Heart right ventricle (tissue), 16 donors: ENCODE measurements at regions of chr1 and their contacts with region 1.

Region 1: DNA sequence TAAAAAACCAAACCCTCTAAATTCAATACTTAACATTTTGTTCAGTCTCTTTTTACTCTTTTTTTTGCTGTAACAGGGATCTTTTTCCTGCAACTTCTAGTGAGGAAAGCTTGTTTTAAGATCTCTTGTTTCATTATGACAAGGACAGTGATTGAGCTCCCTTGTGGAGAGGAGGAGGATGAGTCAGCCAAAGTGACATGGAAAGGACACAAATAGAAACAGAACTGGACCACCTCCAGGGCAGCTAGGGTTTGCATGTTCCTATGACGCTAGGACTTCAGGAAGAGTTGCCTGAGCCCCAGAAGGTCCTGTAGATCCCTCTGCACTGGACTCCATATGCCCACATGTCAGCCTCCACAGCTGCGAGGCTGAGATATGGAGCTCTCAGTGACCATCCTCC is 212.6 kb upstream of the FAM78B start:
- DNase-seq: peak; percentile 10 to 72
- ATAC-seq: peak; percentile 75 to 99 (median 98)
- H3K4me3 ChIP-seq: no peak overlapping the region
- H3K27ac ChIP-seq: peak overlapping the region in 8 of 10 donors; percentile 22 to 72 (median 60)
- H3K4me1 ChIP-seq: peaks cover 0 to 18% (median 0%) of the 10 kb centered on the region in 9 donors
- H3K27me3 ChIP-seq: no peaks in the 10 kb centered on the region
- CTCF ChIP-seq: no peak

Region 2: DNA sequence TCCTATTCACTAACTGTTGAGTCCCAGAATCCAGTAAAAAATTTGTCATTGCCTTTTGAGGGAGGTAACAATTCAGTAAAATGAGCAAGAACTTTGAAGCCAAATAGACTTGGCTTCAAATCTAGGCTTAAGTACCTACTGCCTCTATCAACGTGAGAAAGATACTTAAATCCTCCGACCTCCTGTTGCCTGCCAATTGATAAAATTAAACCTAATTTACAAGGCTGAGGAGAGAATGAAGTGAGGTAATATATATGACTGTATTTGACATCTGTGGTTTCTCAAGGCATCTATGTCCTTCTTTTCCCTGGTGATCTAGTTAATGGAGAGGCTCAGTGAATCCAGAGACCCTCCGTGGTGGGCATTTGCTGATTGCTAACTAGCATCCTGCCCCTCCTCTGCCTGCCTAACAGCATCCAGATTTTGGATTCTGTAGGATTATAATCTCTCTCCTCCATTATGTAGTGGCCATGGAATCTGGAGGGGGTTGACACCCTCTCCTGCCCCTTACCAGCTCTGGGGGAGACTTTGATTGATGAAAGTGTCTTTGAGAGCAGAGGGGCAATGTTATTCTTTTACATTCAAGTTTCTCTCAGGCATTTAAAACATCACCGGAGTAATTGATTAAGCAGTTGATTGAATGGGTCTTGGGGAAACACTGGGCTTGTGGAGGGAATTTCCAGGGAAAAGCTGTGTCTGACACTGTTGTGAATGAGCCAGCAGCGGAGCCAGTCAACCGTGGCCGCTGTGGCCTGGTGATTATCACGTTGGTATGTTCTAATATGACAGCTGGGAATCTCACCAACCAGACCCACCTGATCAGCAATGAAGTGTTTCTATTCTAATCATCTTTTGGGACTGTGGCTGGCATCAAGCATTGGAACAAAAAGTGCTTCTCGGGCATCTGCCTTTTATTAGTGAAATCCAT is 71.9 kb before region 1 on chr1:
- intact Hi-C with region 1: loop called in 2 of 10 experiments (anchors 2 to 5 kb)
- DNase-seq: peak; percentile 50 to 63
- ATAC-seq: peak; percentile 86 to 99 (median 98)
- H3K4me3 ChIP-seq: peak overlapping the region in 3 of 10 donors; percentile 6 to 10 (median 9)
- H3K27ac ChIP-seq: peak overlapping the region; percentile 42 to 90 (median 74)
- H3K4me1 ChIP-seq: peaks cover 0 to 19% (median 0%) of the 10 kb centered on the region in 9 donors
- H3K27me3 ChIP-seq: no peaks in the 10 kb centered on the region
- CTCF ChIP-seq: no peak